AG04450 (cell line): ENCODE measurements at regions of chr18 and their contacts with region 1.

Region 1: DNA sequence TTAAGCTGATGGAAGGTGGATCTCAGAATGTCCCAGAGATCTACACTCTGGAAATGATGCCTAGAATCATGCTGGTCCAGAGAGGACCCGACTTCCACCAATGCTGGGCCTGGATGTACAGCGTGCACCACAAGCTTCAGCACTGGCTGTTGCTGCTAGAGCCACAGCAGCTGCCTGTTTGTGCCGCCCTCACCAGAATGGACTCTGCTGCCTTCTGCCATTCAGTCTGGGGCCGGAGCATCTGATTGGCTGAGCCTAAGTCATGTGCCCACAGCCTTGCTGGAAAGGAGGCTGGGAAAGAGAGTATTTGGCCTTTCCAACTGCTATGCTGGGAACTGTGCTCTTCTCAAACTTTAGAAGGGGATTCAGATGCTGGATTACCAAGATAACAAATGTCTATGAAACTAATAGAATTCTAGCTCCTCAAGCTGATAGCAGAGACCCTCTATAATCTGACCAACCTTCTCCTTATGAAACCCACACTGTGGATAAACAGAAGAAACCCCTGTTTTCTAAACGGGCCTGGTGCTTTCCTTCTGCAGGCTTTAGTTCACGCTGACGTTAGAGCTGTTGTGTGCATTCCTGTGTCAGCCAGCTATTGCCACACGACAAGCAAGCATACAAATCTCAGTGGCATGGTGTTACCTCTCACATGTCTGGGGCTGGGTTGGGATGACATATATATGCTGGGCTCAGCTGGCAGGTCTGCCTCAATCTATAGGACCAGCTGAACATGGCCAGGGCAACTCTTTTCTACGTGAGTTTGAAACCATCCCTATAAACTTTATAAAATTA is 4.1 kb upstream of the LOXHD1 start:
- DNase-seq: no peak
- H3K4me3 ChIP-seq: no peak overlapping the region
- H3K27ac ChIP-seq: no peak overlapping the region
- H3K27me3 ChIP-seq: peaks cover 2% of the 10 kb centered on the region
- CTCF ChIP-seq: no peak

Region 2: DNA sequence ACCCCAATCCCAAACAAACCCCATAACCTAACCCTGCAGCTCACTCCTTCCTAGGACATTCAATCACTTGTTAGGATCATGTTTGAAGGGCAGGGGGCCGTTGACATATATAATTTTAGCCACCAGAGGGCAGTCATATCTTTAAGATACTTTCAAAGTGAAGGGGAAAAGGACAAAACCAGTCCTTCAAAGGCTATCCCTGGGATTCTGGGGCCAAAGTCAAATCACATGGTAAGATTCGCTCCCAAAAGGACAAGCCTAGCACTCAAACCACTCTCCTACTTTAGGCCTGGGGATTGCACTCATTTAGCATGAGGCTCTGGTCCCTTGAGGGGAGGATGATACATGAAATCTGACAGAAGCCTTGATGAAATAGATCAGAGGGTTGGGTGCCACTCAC is 512.3 kb before region 1 on chr18:
- CTCF ChIA-PET with region 1: interaction called, 115 read pairs
- POLR2A ChIA-PET with region 1: no interaction called
- DNase-seq: no peak
- H3K4me3 ChIP-seq: no peak overlapping the region
- H3K27ac ChIP-seq: no peak overlapping the region
- H3K27me3 ChIP-seq: no peaks in the 10 kb centered on the region
- CTCF ChIP-seq: peak; percentile 70

Region 3: DNA sequence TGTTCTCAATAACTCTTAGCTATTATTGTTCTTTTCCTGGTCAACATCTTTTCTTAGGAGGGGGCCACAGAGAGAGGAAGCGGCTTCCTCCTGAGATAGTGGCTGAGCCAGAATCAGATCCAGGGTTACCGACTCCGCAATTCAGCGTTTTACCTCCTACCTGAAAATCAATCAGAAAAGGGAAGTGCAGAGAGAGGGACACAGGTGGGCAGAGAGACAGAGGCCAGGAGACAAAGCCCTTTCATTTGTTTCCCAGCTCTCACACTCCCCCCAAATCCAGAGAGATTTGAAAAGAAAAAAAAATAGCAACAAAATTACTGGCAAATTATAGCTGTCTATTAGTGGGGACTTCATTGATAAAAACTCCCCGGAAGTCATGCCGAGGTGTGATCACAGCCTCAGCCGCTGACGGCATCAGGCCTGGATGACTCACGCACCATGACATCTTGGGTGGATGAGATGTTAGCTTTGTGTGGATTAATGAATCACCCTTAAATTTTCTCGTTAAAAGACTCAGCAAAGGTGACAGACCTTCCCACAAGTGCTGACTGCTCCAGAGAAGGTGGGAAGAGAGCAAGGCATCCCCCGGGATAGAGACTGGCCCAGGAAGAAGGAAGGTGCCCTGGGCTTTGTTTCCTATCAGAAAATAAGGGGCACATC is 124.8 kb before region 1 on chr18:
- CTCF ChIA-PET with region 1: interaction called, 11 read pairs
- POLR2A ChIA-PET with region 1: no interaction called
- DNase-seq: no peak
- H3K4me3 ChIP-seq: no peak overlapping the region
- H3K27ac ChIP-seq: no peak overlapping the region
- H3K27me3 ChIP-seq: peaks cover 3% of the 10 kb centered on the region
- CTCF ChIP-seq: no peak

Region 4: DNA sequence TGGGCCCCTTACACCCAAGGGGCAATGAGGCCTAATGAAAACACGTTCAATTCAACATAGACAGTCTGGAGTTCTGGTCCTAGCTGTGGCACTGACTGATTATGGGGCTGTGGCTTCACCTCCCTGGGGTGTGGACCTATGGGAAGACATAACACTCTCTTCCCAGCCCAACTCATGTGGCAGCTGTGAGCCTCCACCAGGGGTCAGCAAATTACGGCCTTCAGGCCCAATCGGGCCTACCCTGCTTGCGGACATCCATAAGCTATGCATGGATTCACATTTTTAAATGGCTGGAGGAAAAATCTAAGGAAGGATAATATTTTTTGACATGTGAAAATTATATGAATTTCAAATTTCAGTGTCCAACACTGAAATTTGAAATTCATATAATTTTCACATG is 105.4 kb before region 1 on chr18:
- CTCF ChIA-PET with region 1: interaction called, 12 read pairs
- POLR2A ChIA-PET with region 1: no interaction called
- DNase-seq: no peak
- H3K4me3 ChIP-seq: no peak overlapping the region
- H3K27ac ChIP-seq: no peak overlapping the region
- H3K27me3 ChIP-seq: no peaks in the 10 kb centered on the region
- CTCF ChIP-seq: peak; percentile 35

Region 5: GRCh38 chr18:46639386-46639785 is 21.8 kb before region 1 on chr18:
- CTCF ChIA-PET with region 1: interaction called, 11 read pairs
- POLR2A ChIA-PET with region 1: interaction called, 3 read pairs
- DNase-seq: no peak
- H3K4me3 ChIP-seq: no peak overlapping the region
- H3K27ac ChIP-seq: no peak overlapping the region
- H3K27me3 ChIP-seq: peaks cover 3% of the 10 kb centered on the region
- CTCF ChIP-seq: no peak

Region 6: GRCh38 chr18:46649071-46649862 is 11.9 kb before region 1 on chr18:
- CTCF ChIA-PET with region 1: interaction called, 10 read pairs
- POLR2A ChIA-PET with region 1: no interaction called
- DNase-seq: no peak
- H3K4me3 ChIP-seq: no peak overlapping the region
- H3K27ac ChIP-seq: no peak overlapping the region
- H3K27me3 ChIP-seq: peaks cover 5% of the 10 kb centered on the region
- CTCF ChIP-seq: no peak